Adrenal gland (tissue), 19 donors: ENCODE measurements at regions of chr1 and their contacts with region 1.

Region 1: DNA sequence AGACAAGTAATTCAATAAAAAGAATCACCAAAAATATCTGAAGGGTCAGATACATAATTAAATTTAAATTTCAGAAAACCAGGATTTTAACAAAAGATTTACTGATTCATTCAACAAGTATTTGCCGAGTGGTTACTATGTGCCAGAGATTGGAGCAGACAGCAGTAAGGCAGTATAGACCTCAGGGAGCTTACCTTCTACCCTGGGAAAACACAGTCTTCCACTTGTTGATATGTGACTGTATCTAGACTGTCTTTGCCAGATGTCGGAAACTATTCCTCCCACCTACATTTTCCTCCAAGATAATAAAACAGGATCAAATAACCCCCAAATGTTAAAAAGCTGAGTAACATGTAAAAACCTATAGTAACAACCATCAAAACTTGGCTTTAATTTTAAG is 6.2 kb downstream of the HNRNPR start:
- DNase-seq: no peak
- H3K4me3 ChIP-seq: no peak overlapping the region
- H3K27ac ChIP-seq: no peak overlapping the region
- H3K4me1 ChIP-seq: peaks cover 29 to 56% of the 10 kb centered on the region in 2 donors
- H3K27me3 ChIP-seq: no peaks in the 10 kb centered on the region
- CTCF ChIP-seq: no peak
- POLR2A ChIP-seq: no peak

Region 2: DNA sequence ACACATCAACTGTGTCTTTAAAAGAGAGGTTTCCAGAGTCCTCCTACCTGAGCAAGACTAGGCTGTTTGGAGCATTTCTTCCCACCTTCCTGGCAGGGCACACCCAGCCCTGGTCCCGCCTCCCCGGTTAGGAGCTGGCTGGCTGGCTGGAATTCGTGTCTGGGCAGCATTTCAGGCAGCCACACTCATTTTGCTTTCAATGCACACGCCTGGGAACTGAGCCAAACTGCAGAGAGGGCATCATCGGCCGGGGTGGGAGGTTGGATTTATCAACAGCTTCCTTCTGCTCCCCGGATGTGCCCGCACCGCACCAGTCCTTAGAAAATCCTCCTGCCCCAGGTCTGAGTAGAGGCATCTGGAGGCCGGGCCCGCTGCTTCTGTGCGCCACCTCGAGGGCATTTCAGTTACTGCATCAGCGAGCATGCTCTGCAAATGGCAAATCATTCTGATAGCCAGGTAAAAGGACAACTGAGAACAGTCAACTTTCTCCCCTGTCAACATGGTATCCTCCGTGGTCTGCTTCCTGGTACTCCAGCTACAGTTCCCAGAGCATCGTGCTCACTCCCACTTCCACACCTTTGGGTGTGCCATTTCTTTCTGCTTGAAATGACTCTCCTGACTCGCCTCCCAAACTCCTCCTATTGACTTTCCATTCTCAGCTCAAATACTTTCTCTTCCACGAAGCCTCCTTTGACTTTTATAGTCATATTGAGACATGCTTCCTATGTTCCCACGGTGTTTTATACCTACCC is 66.0 kb after region 1 on chr1:
- intact Hi-C with region 1: loop called (anchors 5 to 10 kb)
- DNase-seq: peak; percentile 89 to 97 (median 96)
- H3K4me3 ChIP-seq: no peak overlapping the region
- H3K27ac ChIP-seq: peak overlapping the region in 4 of 5 donors; percentile 33 to 87 (median 50)
- H3K4me1 ChIP-seq: peaks cover 16 to 52% of the 10 kb centered on the region in 2 donors
- H3K27me3 ChIP-seq: no peaks in the 10 kb centered on the region
- CTCF ChIP-seq: peak; percentile 91 to 96 (median 95)
- POLR2A ChIP-seq: peak in 1 of 2 donors; percentile 28